Stomach (tissue), 19 donors: ENCODE measurements at regions of chr9 and their contacts with region 1.

Region 1: GRCh38 chr9:33919276-33919897 is 102.4 kb downstream of the UBE2R2 start:
- DNase-seq: no peak
- H3K4me3 ChIP-seq: no peak overlapping the region
- H3K27ac ChIP-seq: no peak overlapping the region
- H3K4me1 ChIP-seq: peaks cover 0 to 21% (median 11%) of the 10 kb centered on the region in 4 donors
- H3K27me3 ChIP-seq: no peaks in the 10 kb centered on the region
- CTCF ChIP-seq: no peak
- EP300 ChIP-seq: no peak
- POLR2A ChIP-seq: no peak

Region 2: GRCh38 chr9:33867747-33868439 is 51.5 kb before region 1 on chr9:
- intact Hi-C with region 1: loop called (anchors 10 kb)
- DNase-seq: no peak
- H3K4me3 ChIP-seq: no peak overlapping the region
- H3K27ac ChIP-seq: peak overlapping the region in 3 of 5 donors; percentile 42 to 55 (median 53)
- H3K4me1 ChIP-seq: peaks cover 15 to 57% (median 31%) of the 10 kb centered on the region in 4 donors
- H3K27me3 ChIP-seq: no peaks in the 10 kb centered on the region
- CTCF ChIP-seq: no peak
- EP300 ChIP-seq: no peak
- POLR2A ChIP-seq: no peak